ENCODE measurements at regions of chr5 and their contacts with region 1.

Region 1: DNA sequence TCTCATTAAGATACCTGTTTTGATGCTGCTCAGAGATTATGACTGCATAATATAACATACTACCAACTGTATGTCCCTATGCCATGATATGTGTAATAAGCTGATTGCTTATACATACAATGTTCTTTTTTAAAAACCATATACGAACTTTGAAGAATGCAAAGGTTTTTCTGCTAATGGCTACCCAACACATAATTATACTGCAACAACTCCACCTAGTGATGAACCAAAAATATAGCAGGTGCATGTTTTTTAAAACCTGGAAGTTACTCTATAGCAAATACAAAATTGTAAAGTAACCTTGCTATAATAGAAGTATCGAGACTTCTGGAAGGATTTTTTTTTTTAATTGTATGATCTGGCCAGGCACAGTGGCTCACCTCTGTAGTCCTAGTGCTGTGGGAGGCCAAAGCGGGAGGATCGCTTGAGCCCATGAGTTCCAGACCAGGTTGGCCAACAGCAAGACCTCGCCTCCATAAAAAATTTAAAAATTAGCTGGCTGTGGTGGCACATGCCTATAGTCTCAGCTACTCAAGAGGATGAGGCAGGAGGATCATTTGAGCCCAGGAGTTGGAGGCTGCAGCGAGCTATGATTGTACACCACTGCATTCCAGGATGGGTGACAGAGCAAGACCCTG is 49.1 kb downstream of the HOMER1 start:
- DNase-seq: no peak
- ATAC-seq: peak; percentile 12 to 47

Region 2: GRCh38 chr5:79133657-79134451 is 331.0 kb before region 1 on chr5:
- intact Hi-C with region 1: loop called in 1 of 2 experiments (anchors 5 kb)
- DNase-seq: peak; percentile 67
- ATAC-seq: peak; percentile 77 to 93

Region 3: GRCh38 chr5:79318935-79319614 is 145.7 kb before region 1 on chr5:
- intact Hi-C with region 1: loop called in 1 of 2 experiments (anchors 5 kb)
- DNase-seq: no peak
- ATAC-seq: peak in 1 of 2 donors; percentile 97

Region 4: GRCh38 chr5:79712741-79713140 is 247.9 kb after region 1 on chr5:
- intact Hi-C with region 1: no loop called
- DNase-seq: no peak
- ATAC-seq: no peak

Measured in left cardiac atrium (tissue), 4 donors.